PC-9 (cell line): ENCODE measurements at regions of chr13 and their contacts with region 1.

Region 1: DNA sequence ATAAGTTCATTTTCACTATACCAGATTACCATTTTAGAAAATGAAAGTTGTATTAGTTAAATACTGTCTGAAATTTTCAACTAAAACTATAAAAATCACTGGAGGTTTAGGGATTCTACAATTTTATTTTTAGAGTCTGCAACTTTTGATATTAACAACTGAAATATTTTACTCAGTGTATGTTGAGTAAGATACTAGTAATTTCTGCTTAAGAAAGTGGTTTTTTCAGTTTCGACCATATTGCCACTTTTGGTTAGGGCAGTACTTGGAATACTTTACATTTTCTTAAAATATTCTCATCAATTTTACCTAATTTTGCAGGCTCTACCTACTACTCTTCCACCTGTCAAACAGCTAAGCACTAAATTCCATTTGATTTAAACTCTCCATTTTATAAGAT is 59.6 kb downstream of the KCNRG start:
- DNase-seq: no peak
- H3K4me3 ChIP-seq: no peak overlapping the region
- H3K27ac ChIP-seq: peak overlapping the region; percentile 44
- H3K4me1 ChIP-seq: peaks cover 53% of the 10 kb centered on the region
- H3K27me3 ChIP-seq: no peaks in the 10 kb centered on the region
- CTCF ChIP-seq: no peak

Region 2: GRCh38 chr13:49976314-49977258 is 98.3 kb before region 1 on chr13:
- CTCF ChIA-PET with region 1: interaction called, 11 read pairs
- POLR2A ChIA-PET with region 1: no interaction called
- intact Hi-C with region 1: no loop called
- DNase-seq: peak; percentile 58
- H3K4me3 ChIP-seq: no peak overlapping the region
- H3K27ac ChIP-seq: no peak overlapping the region
- H3K4me1 ChIP-seq: no peaks in the 10 kb centered on the region
- H3K27me3 ChIP-seq: no peaks in the 10 kb centered on the region
- CTCF ChIP-seq: peak; percentile 94

Region 3: DNA sequence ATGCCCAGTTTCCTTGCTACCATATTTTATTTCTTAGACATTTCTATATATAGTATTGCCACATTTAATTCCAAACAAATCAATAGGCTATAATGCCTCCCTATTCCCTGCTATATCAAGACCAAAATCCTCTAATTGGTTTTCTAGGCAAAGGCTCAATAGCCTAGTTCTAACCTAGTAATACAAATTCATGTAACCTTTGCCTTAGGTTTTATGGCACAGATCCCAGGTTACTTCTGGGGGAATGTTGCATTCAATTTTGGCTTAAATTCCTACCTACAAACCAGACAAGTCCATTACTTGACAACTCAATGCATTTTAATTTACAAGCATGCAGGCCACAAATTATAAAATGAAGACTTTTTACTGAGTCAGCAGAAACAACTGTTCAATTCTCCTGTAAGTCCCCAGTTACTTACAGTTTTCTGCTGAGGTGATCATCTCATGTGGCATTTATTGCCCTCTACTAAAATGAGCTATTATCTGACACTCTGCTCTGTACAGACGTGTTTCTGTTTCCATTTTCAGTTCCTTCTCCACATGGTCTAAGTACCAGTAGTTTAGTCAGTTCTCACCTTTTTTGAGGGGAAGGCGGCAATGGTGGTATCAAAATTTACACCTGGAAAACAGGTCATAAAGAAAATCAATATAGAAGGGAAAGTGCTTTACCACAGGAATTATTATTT is 47.9 kb before region 1 on chr13:
- CTCF ChIA-PET with region 1: no interaction called
- POLR2A ChIA-PET with region 1: no interaction called
- intact Hi-C with region 1: loop called (anchors 5 kb)
- DNase-seq: no peak
- H3K4me3 ChIP-seq: no peak overlapping the region
- H3K27ac ChIP-seq: no peak overlapping the region
- H3K4me1 ChIP-seq: no peaks in the 10 kb centered on the region
- H3K27me3 ChIP-seq: no peaks in the 10 kb centered on the region
- CTCF ChIP-seq: no peak